ENCODE measurements at regions of chr1 and their contacts with region 1.

Region 1: DNA sequence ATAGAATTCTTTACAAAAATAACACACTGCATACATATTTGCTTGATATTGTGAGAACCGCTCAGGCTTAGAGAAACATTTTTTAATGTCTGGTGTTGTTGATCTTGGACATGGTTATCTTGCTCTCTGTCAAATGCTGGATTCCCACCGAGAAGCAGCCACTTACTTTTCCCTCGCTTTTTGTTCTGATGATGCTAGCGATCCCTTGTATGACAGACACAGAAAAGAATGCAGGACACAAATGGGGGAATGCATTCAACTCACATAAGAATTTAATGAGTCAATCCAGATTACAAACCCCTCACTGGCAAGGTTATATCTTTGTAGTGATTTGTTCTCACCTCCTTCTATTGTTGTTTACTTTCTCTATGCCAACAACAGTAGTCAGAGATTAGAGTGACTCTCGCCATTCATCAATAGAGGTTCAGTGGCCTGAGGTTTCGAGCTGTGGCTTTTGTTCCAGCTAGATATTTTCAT is 76.8 kb upstream of the AKT3 start:
- DNase-seq: no peak
- ATAC-seq: peak; percentile 30
- H3K4me3 ChIP-seq: peak overlapping the region in 1 of 2 donors; percentile 20
- H3K27ac ChIP-seq: no peak overlapping the region
- H3K4me1 ChIP-seq: peaks cover 3 to 9% of the 10 kb centered on the region in 2 donors
- H3K27me3 ChIP-seq: no peaks in the 10 kb centered on the region

Region 2: DNA sequence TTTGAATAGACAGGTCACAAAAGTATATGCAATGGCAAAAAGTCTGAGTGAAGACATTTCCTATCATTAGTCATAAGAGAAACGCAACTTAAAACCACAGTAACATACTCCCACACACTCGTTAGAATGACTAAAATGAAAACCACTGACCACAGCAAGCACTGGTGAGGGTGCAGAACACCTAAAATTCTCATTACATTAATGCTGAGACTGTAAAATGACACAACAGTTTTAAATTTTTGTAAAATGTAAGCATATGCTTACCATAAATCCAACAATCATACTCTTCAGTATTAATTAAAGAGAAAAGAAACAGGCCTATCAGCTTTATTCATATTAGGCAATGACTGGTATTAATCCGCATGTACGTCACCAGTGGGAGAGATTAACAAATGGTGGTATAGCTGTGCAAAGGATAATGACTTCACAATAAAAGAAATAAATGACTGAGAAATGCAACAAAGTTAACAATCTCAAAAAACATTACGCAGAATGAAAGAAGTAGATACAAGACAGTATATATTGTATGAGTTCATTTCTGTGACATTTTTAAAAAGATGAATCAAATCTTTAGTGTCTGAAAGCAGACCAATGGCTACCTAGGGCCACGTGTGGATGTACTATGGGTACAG is 330.3 kb before region 1 on chr1:
- intact Hi-C with region 1: loop called in 1 of 2 experiments (anchors 5 kb)
- DNase-seq: no peak
- ATAC-seq: no peak
- H3K4me3 ChIP-seq: no peak overlapping the region
- H3K27ac ChIP-seq: no peak overlapping the region
- H3K4me1 ChIP-seq: no peaks in the 10 kb centered on the region
- H3K27me3 ChIP-seq: no peaks in the 10 kb centered on the region

Region 3: GRCh38 chr1:243770860-243771259 is 156.0 kb before region 1 on chr1:
- intact Hi-C with region 1: no loop called
- DNase-seq: no peak
- ATAC-seq: no peak
- H3K4me3 ChIP-seq: no peak overlapping the region
- H3K27ac ChIP-seq: no peak overlapping the region
- H3K4me1 ChIP-seq: no peaks in the 10 kb centered on the region
- H3K27me3 ChIP-seq: no peaks in the 10 kb centered on the region

Region 4: DNA sequence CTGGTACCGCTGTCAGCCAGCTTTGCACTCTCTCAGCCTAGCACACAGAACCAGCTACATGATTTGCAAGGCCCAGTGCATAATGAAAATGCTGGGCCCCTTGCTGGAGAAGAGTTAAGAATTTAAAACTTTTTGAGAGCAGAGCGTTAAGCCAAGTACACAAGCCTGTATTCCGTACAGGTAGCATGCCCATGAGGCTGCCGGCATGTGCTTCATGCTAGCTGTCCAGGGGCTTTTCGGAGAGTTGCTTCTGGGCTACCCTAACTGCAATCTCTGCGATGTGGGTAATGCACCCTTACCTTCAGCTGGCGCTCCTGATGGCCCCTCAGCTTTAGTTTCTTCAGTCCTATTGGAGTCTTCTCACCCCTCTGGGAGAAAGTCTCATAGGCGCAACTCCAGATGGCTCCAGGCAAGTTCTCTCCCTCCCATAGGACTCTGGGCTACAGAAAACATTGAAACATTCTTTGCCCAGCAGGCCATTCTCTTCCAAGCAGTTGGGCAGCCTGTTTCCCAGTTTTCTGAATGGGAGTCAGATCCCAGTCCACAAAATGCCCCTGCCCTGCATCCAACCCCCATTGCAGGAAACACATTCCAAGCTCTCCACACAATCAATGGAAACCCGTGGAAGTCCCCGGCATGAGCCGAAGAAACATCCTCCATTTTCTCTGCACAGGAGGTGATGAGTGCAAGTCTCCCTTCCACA is 71.1 kb before region 1 on chr1:
- intact Hi-C with region 1: loop called in 1 of 2 experiments (anchors 5 kb)
- DNase-seq: no peak
- ATAC-seq: no peak
- H3K4me3 ChIP-seq: no peak overlapping the region
- H3K27ac ChIP-seq: no peak overlapping the region
- H3K4me1 ChIP-seq: no peaks in the 10 kb centered on the region
- H3K27me3 ChIP-seq: peaks cover 0 to 1% of the 10 kb centered on the region in 2 donors

Region 5: DNA sequence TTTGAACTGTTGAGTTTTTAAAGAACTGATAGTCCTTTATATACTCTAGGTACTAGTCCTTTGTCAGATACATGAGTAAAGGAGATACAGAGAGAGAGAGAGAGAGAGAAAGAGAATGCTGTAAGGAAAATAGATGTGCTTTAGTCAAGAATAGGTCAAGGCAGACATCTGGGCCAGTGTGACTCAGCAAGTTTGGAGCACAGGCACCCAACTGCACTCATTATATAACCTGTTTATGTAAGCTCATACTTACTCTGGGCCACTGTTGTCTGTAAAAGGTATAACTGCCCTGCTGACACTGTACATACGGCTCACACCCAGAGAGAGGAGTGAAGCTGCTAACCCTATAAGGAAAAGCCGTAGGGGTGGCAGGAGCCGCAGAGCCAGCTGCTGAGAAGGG is 44.6 kb before region 1 on chr1:
- intact Hi-C with region 1: no loop called
- DNase-seq: no peak
- ATAC-seq: no peak
- H3K4me3 ChIP-seq: no peak overlapping the region
- H3K27ac ChIP-seq: no peak overlapping the region
- H3K4me1 ChIP-seq: no peaks in the 10 kb centered on the region
- H3K27me3 ChIP-seq: no peaks in the 10 kb centered on the region

Region 6: DNA sequence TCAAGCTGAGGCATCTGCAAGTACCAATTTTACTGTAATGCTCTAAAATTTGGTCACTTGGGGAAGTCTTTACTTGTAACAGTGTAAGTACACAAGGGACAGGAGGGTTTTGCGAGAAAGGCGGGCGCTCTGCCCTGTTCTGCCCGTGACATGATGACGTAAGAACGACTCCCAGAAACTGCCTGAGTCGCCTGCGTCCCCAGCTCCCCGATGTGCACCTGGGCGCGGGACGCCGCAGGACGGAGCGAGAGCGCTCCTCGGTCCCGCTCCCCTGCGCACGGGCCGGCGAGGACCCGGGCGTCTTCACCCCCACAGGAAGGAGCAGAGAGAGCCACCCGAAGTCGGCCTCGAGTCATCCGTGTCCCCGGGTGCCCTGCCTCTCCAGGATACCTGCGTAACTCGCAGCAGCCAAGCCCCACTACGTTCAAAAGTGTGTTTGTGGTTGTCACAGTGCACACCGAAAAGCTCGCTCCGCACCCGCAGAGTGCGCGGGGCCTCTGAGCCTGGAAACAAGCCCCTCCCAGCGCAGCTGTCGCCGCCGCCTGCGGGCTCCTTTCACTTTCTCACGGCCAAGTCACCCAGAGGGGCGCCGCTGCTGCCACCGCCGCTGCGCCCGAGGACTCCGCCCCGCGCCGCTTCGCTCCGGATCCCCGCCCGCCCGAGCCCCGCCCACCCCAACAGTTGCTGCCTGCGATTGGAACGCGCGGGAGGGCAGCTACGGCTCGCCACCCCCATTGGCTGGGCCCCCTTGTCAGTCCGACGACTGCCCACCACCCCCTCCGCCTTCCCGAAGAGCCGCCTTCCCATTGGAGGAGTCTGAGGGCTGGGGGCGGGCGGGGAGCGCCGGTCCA is 121.0 kb after region 1 on chr1:
- intact Hi-C with region 1: loop called in 1 of 2 experiments (anchors 5 kb)
- DNase-seq: peak; percentile 99 to 100
- ATAC-seq: peak; percentile 98
- H3K4me3 ChIP-seq: peak overlapping the region; percentile 58 to 82
- H3K27ac ChIP-seq: peak overlapping the region; percentile 50 to 88
- H3K4me1 ChIP-seq: no peaks in the 10 kb centered on the region
- H3K27me3 ChIP-seq: no peaks in the 10 kb centered on the region

Measured in aorta (tissue), 5 donors.